ENCODE measurements at regions of chr13 and their contacts with region 1.

Region 1: GRCh38 chr13:26062844-26063444 is 11.1 kb upstream of the SHISA2 start:
- DNase-seq: peak in 11 of 14 experiments; percentile 8 to 77 (median 25)
- ATAC-seq: peak; percentile 60
- H3K4me3 ChIP-seq: no peak overlapping the region
- H3K4me3 Mint-ChIP-seq: no peak overlapping the region
- H3K27ac ChIP-seq: no peak overlapping the region
- H3K27ac Mint-ChIP-seq: no peak overlapping the region
- H3K4me1 ChIP-seq: no peaks in the 10 kb centered on the region
- H3K4me1 Mint-ChIP-seq: no peaks in the 10 kb centered on the region
- H3K27me3 ChIP-seq: no peaks in the 10 kb centered on the region
- H3K27me3 Mint-ChIP-seq: peaks cover 10% of the 10 kb centered on the region
- CTCF ChIP-seq: peak; percentile 67

Region 2: GRCh38 chr13:25391932-25392331 is 671.0 kb before region 1 on chr13:
- CTCF ChIA-PET with region 1: no interaction called
- POLR2A ChIA-PET with region 1: no interaction called
- intact Hi-C with region 1: no loop called
- DNase-seq: no peak
- ATAC-seq: no peak
- H3K4me3 ChIP-seq: no peak overlapping the region
- H3K4me3 Mint-ChIP-seq: no peak overlapping the region
- H3K27ac ChIP-seq: no peak overlapping the region
- H3K27ac Mint-ChIP-seq: no peak overlapping the region
- H3K4me1 ChIP-seq: no peaks in the 10 kb centered on the region
- H3K4me1 Mint-ChIP-seq: no peaks in the 10 kb centered on the region
- H3K27me3 ChIP-seq: peaks cover 0 to 5% of the 10 kb centered on the region in 2 experiments
- H3K27me3 Mint-ChIP-seq: peaks cover 39% of the 10 kb centered on the region
- CTCF ChIP-seq: no peak

Region 3: DNA sequence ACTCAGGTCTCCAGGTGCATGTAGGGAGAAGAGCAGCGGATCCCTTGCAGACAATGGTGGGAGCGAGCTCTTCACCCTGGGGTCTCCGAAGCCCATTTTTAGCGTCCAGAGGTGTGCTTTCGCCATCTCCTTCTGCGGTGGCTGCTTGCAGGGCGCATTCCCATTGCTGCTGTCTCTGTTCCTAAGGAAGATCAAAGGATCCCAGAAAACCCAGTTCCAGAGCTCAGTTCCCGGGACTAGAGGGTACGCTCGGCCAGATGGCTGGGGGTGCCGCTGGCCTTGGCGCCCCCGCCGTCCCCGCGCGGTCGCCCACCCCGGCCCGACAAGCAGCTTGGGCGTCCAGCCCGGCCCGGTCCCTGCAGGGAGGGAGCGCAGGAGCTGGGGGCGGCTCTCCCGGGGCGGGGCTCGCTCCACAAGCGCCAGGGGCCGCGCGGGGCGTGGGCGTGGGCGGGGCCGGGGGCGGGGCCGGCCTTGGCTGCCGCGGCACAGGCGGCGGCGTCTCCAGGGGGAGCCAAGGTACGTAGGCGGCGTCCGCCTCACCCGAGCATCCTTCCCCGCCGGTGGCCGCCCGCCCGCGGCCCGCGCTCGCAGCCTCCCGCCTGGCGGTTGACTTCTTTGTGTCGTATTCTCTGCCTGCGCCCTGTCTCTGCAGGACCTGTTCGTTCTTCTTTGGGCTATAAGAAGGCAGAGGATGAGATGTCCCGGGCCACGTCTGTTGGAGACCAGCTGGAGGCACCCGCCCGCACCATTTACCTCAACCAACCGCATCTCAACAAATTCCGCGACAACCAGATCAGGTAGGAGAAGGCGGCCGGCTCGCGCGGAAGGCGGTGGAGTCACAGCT is 594.4 kb before region 1 on chr13:
- CTCF ChIA-PET with region 1: no interaction called
- POLR2A ChIA-PET with region 1: no interaction called
- intact Hi-C with region 1: no loop called
- DNase-seq: no peak
- ATAC-seq: no peak
- H3K4me3 ChIP-seq: no peak overlapping the region
- H3K4me3 Mint-ChIP-seq: no peak overlapping the region
- H3K27ac ChIP-seq: no peak overlapping the region
- H3K27ac Mint-ChIP-seq: no peak overlapping the region
- H3K4me1 ChIP-seq: peaks cover 6% of the 10 kb centered on the region
- H3K4me1 Mint-ChIP-seq: peaks cover 4% of the 10 kb centered on the region
- H3K27me3 ChIP-seq: peaks cover 34% of the 10 kb centered on the region in 2 experiments
- H3K27me3 Mint-ChIP-seq: peaks cover 77% of the 10 kb centered on the region
- CTCF ChIP-seq: no peak

Region 4: DNA sequence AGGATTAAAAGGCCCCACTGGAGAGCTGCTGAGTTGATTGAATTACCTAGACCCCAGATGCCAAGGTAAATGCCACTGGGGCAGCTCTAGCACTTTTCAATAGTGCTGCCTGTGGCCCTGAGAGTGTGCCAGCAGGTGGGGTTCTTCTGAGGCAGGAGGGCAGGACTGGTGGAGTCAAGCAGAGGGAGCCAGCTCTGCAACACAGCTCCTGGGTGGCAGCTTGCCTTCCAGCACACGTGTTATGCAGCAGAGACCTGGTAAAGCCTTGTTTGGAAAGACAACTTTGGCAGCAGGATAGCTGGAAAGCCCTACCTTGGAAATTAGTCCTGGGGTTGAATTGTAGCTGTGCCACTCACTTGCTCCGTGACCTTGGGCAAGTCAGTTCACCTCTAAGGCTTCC is 384.5 kb before region 1 on chr13:
- CTCF ChIA-PET with region 1: no interaction called
- POLR2A ChIA-PET with region 1: no interaction called
- intact Hi-C with region 1: loop called (anchors 2 to 5 kb)
- DNase-seq: peak in 8 of 14 experiments; percentile 2 to 37 (median 6)
- ATAC-seq: no peak
- H3K4me3 ChIP-seq: no peak overlapping the region
- H3K4me3 Mint-ChIP-seq: no peak overlapping the region
- H3K27ac ChIP-seq: no peak overlapping the region
- H3K27ac Mint-ChIP-seq: no peak overlapping the region
- H3K4me1 ChIP-seq: no peaks in the 10 kb centered on the region
- H3K4me1 Mint-ChIP-seq: no peaks in the 10 kb centered on the region
- H3K27me3 ChIP-seq: peaks cover 0 to 3% of the 10 kb centered on the region in 2 experiments
- H3K27me3 Mint-ChIP-seq: peaks cover 13% of the 10 kb centered on the region
- CTCF ChIP-seq: no peak

Region 5: GRCh38 chr13:25827831-25828465 is 235.0 kb before region 1 on chr13:
- CTCF ChIA-PET with region 1: interaction called, 3 read pairs
- POLR2A ChIA-PET with region 1: no interaction called
- intact Hi-C with region 1: loop called (anchors 2 kb)
- DNase-seq: no peak
- ATAC-seq: no peak
- H3K4me3 ChIP-seq: no peak overlapping the region
- H3K4me3 Mint-ChIP-seq: no peak overlapping the region
- H3K27ac ChIP-seq: no peak overlapping the region
- H3K27ac Mint-ChIP-seq: no peak overlapping the region
- H3K4me1 ChIP-seq: no peaks in the 10 kb centered on the region
- H3K4me1 Mint-ChIP-seq: no peaks in the 10 kb centered on the region
- H3K27me3 ChIP-seq: no peaks in the 10 kb centered on the region
- H3K27me3 Mint-ChIP-seq: no peaks in the 10 kb centered on the region
- CTCF ChIP-seq: no peak

Measured in CD4-positive, alpha-beta T cell (primary cell).